CD14-positive monocyte (primary cell): ENCODE measurements at regions of chr19 and their contacts with region 1.

Region 1: GRCh38 chr19:506404-507285 is 652 bp upstream of the TPGS1 start:
- DNase-seq: peak; percentile 98 to 100 (median 99)
- H3K4me3 ChIP-seq: peak overlapping the region; percentile 71 to 99 (median 90)
- H3K4me3 Mint-ChIP-seq: peak overlapping the region; percentile 84 to 93
- H3K27ac ChIP-seq: peak overlapping the region; percentile 88 to 92
- H3K27ac Mint-ChIP-seq: peak overlapping the region; percentile 97 to 100 (median 100)
- H3K4me1 ChIP-seq: peaks cover 42 to 53% of the 10 kb centered on the region in 2 donors
- H3K4me1 Mint-ChIP-seq: peaks cover 36% of the 10 kb centered on the region
- H3K27me3 ChIP-seq: no peaks in the 10 kb centered on the region
- H3K27me3 Mint-ChIP-seq: peaks cover 4 to 7% (median 4%) of the 10 kb centered on the region in 3 donors
- CTCF ChIP-seq: peak; percentile 96

Region 2: GRCh38 chr19:289651-290371 is 216.8 kb before region 1 on chr19:
- intact Hi-C with region 1: no loop called
- DNase-seq: no peak
- H3K4me3 ChIP-seq: no peak overlapping the region
- H3K4me3 Mint-ChIP-seq: peak overlapping the region in 1 of 2 donors; percentile 72
- H3K27ac ChIP-seq: no peak overlapping the region
- H3K27ac Mint-ChIP-seq: peak overlapping the region in 1 of 7 donors; percentile 46
- H3K4me1 ChIP-seq: peaks cover 0 to under 1% of the 10 kb centered on the region in 2 donors
- H3K4me1 Mint-ChIP-seq: peaks cover 5% of the 10 kb centered on the region
- H3K27me3 ChIP-seq: peaks cover 20 to 55% of the 10 kb centered on the region in 2 donors
- H3K27me3 Mint-ChIP-seq: peaks cover 47 to 67% (median 60%) of the 10 kb centered on the region in 3 donors
- CTCF ChIP-seq: no peak

Region 3: GRCh38 chr19:344625-345319 is 161.9 kb before region 1 on chr19 and contains the start of gene MIER2:
- intact Hi-C with region 1: loop called in 1 of 2 experiments (anchors 5 kb)
- DNase-seq: peak; percentile 74 to 85 (median 77)
- H3K4me3 ChIP-seq: peak within 1 kb of the TSS; percentile 41 to 86 (median 81)
- H3K4me3 Mint-ChIP-seq: peak within 1 kb of the TSS; percentile 87 to 88
- H3K27ac ChIP-seq: peak within 1 kb of the TSS; percentile 60 to 91
- H3K27ac Mint-ChIP-seq: peak within 1 kb of the TSS; percentile 58 to 97 (median 93)
- H3K4me1 ChIP-seq: peaks cover 43 to 51% of the 10 kb centered on the region in 2 donors
- H3K4me1 Mint-ChIP-seq: peaks cover 51% of the 10 kb centered on the region
- H3K27me3 ChIP-seq: peaks cover 0 to 19% of the 10 kb centered on the region in 2 donors
- H3K27me3 Mint-ChIP-seq: peaks cover 18 to 33% (median 27%) of the 10 kb centered on the region in 3 donors
- CTCF ChIP-seq: no peak
- polyA plus RNA-seq, gene MIER2: 3.6 to 21.9 (median 6.9) TPM

Region 4: GRCh38 chr19:435056-435706 is 71.5 kb before region 1 on chr19:
- intact Hi-C with region 1: no loop called
- DNase-seq: no peak
- H3K4me3 ChIP-seq: no peak overlapping the region
- H3K4me3 Mint-ChIP-seq: no peak overlapping the region
- H3K27ac ChIP-seq: no peak overlapping the region
- H3K27ac Mint-ChIP-seq: no peak overlapping the region
- H3K4me1 ChIP-seq: no peaks in the 10 kb centered on the region
- H3K4me1 Mint-ChIP-seq: no peaks in the 10 kb centered on the region
- H3K27me3 ChIP-seq: no peaks in the 10 kb centered on the region
- H3K27me3 Mint-ChIP-seq: peaks cover 0 to 3% (median 0%) of the 10 kb centered on the region in 3 donors
- CTCF ChIP-seq: no peak

Region 5: GRCh38 chr19:447816-448560 is 58.7 kb before region 1 on chr19:
- intact Hi-C with region 1: no loop called
- DNase-seq: no peak
- H3K4me3 ChIP-seq: no peak overlapping the region
- H3K4me3 Mint-ChIP-seq: peak overlapping the region in 1 of 2 donors; percentile 53
- H3K27ac ChIP-seq: no peak overlapping the region
- H3K27ac Mint-ChIP-seq: peak overlapping the region in 1 of 7 donors; percentile 35
- H3K4me1 ChIP-seq: no peaks in the 10 kb centered on the region
- H3K4me1 Mint-ChIP-seq: no peaks in the 10 kb centered on the region
- H3K27me3 ChIP-seq: peaks cover 0 to 2% of the 10 kb centered on the region in 2 donors
- H3K27me3 Mint-ChIP-seq: peaks cover 10 to 23% (median 10%) of the 10 kb centered on the region in 3 donors
- CTCF ChIP-seq: no peak

Region 6: DNA sequence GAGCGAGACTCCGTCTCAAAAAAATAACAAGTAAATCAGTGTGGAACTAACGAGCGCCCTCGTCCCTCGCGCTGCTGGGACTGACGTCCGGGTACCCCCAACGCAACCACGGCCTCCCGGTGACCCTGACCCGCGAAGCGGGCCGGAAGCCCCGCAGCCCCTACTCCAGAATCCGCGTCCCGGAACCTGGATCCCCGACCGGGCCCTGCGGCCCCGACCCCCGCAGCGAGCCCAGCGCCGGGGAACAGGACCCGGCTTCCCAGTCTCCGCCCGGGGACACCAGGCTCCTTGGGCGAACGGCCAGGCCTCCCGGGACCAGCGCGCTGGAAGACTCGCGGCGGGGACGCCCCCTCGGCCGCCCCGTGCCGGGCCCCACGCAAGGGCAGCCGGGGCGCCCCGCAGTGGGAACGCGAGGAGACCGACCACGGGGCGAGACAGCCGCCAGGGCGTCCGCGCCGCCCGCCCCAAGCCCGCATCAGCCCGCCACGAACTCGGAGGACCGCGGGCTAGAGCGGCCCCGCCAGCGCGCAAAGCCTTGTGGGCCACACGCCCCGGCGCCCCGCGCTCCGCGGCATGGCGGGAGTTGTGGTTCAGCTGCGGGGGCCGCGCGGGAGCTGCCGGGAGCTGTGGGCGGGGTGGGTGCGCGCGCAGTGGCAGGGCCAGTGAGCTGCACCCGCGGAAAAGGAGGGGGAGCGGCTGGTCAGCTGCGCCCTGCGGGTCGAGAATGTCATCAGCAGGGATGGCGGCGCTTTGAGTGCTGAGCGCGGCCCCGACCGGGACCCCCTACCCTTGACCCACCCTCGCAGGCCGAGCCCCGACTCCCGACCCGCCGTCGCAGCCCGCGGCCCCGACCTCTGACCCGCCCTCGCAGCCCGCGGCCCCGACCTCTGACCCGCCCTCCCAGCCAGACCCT is 17.9 kb before region 1 on chr19:
- intact Hi-C with region 1: loop called (anchors 1 to 2 kb)
- DNase-seq: peak; percentile 76 to 91 (median 89)
- H3K4me3 ChIP-seq: peak overlapping the region; percentile 65 to 91 (median 71)
- H3K4me3 Mint-ChIP-seq: peak overlapping the region; percentile 83 to 87
- H3K27ac ChIP-seq: peak overlapping the region; percentile 76 to 84
- H3K27ac Mint-ChIP-seq: peak overlapping the region in 6 of 7 donors; percentile 66 to 92 (median 80)
- H3K4me1 ChIP-seq: peaks cover 12 to 19% of the 10 kb centered on the region in 2 donors
- H3K4me1 Mint-ChIP-seq: peaks cover 11% of the 10 kb centered on the region
- H3K27me3 ChIP-seq: peaks cover 0 to 9% of the 10 kb centered on the region in 2 donors
- H3K27me3 Mint-ChIP-seq: peaks cover 24 to 36% (median 32%) of the 10 kb centered on the region in 3 donors
- CTCF ChIP-seq: no peak

Region 7: DNA sequence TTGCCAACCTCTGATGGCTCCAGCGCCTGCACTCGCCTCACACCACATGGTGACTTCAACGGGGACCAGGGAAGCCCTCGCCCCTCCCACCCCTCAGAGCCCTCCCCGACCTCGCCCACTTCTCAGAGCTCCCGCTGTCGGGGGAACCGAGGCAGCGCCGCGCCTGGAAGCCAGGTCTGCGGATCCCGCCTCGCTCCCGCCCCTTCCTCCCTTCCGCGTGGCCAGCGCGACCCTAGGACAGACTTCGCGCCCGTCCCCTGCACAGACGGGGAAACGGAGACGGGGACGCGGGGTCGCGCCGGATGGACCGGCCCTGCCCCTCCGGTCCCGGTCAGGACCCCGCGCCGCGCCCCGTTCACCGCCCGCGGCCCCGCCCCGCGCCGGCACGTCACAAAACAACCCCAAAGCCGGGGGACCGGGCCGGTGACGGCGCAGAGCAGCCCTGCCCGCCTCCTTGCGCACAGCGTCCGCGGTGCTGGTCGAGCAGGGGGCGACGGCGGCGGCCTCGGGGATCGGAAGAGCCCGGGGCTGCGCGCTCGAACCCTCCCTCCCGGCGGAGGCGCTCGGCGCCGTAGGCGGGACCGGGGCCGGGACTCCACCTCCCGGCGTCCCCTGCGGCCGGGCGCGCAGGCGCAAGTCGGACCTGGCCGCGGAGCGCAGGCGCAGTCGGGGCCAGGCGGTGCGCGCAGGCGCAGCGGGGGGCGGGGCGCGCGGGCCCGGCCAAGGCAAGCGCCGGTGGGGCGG is 24.5 kb after region 1 on chr19:
- intact Hi-C with region 1: loop called in 1 of 2 experiments (anchors 1 kb)
- DNase-seq: peak; percentile 70 to 77 (median 75)
- H3K4me3 ChIP-seq: peak overlapping the region; percentile 53 to 91 (median 77)
- H3K4me3 Mint-ChIP-seq: peak overlapping the region; percentile 80 to 84
- H3K27ac ChIP-seq: peak overlapping the region in 1 of 2 donors; percentile 82
- H3K27ac Mint-ChIP-seq: peak overlapping the region in 5 of 7 donors; percentile 45 to 89 (median 67)
- H3K4me1 ChIP-seq: peaks cover 24 to 27% of the 10 kb centered on the region in 2 donors
- H3K4me1 Mint-ChIP-seq: peaks cover 23% of the 10 kb centered on the region
- H3K27me3 ChIP-seq: peaks cover 0 to 1% of the 10 kb centered on the region in 2 donors
- H3K27me3 Mint-ChIP-seq: peaks cover under 1 to 4% (median 2%) of the 10 kb centered on the region in 3 donors
- CTCF ChIP-seq: no peak

Region 8: GRCh38 chr19:543910-544608 is 37.4 kb after region 1 on chr19 and contains the start of gene GZMM:
- intact Hi-C with region 1: no loop called
- DNase-seq: no peak
- H3K4me3 ChIP-seq: no peak within 1 kb of the TSS
- H3K4me3 Mint-ChIP-seq: peak within 1 kb of the TSS; percentile 26 to 37
- H3K27ac ChIP-seq: no peak within 1 kb of the TSS
- H3K27ac Mint-ChIP-seq: peak within 1 kb of the TSS in 1 of 7 donors; percentile 73
- H3K4me1 ChIP-seq: peaks cover 0 to 5% of the 10 kb centered on the region in 2 donors
- H3K4me1 Mint-ChIP-seq: peaks cover 11% of the 10 kb centered on the region
- H3K27me3 ChIP-seq: no peaks in the 10 kb centered on the region
- H3K27me3 Mint-ChIP-seq: peaks cover 9 to 19% (median 15%) of the 10 kb centered on the region in 3 donors
- CTCF ChIP-seq: no peak
- polyA plus RNA-seq, gene GZMM: 0.32 to 1.4 (median 0.48) TPM

Region 9: DNA sequence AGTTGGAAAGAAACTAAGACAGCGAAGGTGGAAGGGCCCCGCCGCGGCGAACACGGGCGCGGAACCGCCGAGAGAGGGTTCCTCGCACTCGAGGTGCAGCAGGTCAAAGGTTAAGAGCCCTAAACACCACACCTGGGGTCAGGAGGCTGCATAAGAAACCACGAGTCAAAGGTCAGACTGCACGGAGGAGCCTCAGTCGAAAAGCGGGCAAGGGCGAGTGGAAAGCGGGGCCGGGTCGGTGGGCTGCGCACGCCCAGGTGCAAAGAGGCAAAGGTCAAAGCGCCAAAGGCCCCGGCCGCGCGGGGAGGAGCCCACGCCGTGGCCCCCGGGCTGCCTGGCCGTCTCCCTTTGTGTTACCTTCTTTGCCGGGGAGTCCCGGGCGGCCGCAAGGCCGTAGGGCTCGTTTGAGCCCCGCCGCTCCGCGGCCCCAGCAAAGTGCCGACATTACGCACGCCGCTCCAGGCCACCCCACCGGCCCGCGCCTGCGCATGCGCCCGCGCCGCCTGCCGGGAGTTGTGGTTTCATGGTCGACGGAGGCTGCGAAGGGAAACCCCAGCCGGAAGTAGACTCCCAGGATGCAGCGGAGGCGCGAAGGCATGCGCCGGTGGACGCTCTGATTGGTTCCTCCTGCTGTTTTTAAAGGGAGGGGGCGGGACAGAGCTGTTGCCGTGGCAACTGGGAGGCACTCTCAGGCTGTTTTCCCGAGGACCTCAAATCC is 126.6 kb after region 1 on chr19 and contains the start of gene POLRMT:
- intact Hi-C with region 1: loop called in 1 of 2 experiments (anchors 10 kb)
- DNase-seq: peak; percentile 98 to 99 (median 98)
- H3K4me3 ChIP-seq: peak within 1 kb of the TSS; percentile 72 to 99 (median 81)
- H3K4me3 Mint-ChIP-seq: peak within 1 kb of the TSS; percentile 94 to 98
- H3K27ac ChIP-seq: peak within 1 kb of the TSS in 1 of 2 donors; percentile 69
- H3K27ac Mint-ChIP-seq: peak within 1 kb of the TSS; percentile 75 to 90 (median 85)
- H3K4me1 ChIP-seq: peaks cover 18 to 26% of the 10 kb centered on the region in 2 donors
- H3K4me1 Mint-ChIP-seq: peaks cover 24% of the 10 kb centered on the region
- H3K27me3 ChIP-seq: peaks cover 0 to 2% of the 10 kb centered on the region in 2 donors
- H3K27me3 Mint-ChIP-seq: peaks cover 13 to 17% (median 14%) of the 10 kb centered on the region in 3 donors
- CTCF ChIP-seq: no peak
- polyA plus RNA-seq, gene POLRMT: 16.2 to 40.5 (median 17.6) TPM